CD14-positive monocyte (primary cell): ENCODE measurements at regions of chr5 and their contacts with region 1.

Region 1: GRCh38 chr5:15013654-15014463 is 142.3 kb upstream of the ANKH start:
- DNase-seq: peak in 2 of 3 donors; percentile 23 to 38
- H3K4me3 ChIP-seq: no peak overlapping the region
- H3K4me3 Mint-ChIP-seq: no peak overlapping the region
- H3K27ac ChIP-seq: no peak overlapping the region
- H3K27ac Mint-ChIP-seq: no peak overlapping the region
- H3K4me1 ChIP-seq: no peaks in the 10 kb centered on the region
- H3K4me1 Mint-ChIP-seq: no peaks in the 10 kb centered on the region
- H3K27me3 ChIP-seq: peaks cover 0 to 2% of the 10 kb centered on the region in 2 donors
- H3K27me3 Mint-ChIP-seq: peaks cover 4 to 13% (median 7%) of the 10 kb centered on the region in 3 donors
- CTCF ChIP-seq: peak; percentile 88

Region 2: GRCh38 chr5:14351845-14352712 is 661.8 kb before region 1 on chr5:
- intact Hi-C with region 1: loop called in 1 of 2 experiments (anchors 10 kb)
- DNase-seq: peak; percentile 64 to 80 (median 69)
- H3K4me3 ChIP-seq: peak overlapping the region in 1 of 3 experiments; percentile 54
- H3K4me3 Mint-ChIP-seq: peak overlapping the region in 1 of 2 donors; percentile 74
- H3K27ac ChIP-seq: peak overlapping the region; percentile 3 to 47
- H3K27ac Mint-ChIP-seq: peak overlapping the region in 5 of 7 donors; percentile 45 to 83 (median 55)
- H3K4me1 ChIP-seq: peaks cover 33 to 43% of the 10 kb centered on the region in 2 donors
- H3K4me1 Mint-ChIP-seq: peaks cover 44% of the 10 kb centered on the region
- H3K27me3 ChIP-seq: no peaks in the 10 kb centered on the region
- H3K27me3 Mint-ChIP-seq: peaks cover 0 to 1% (median 0%) of the 10 kb centered on the region in 3 donors
- CTCF ChIP-seq: peak; percentile 98

Region 3: GRCh38 chr5:14685757-14686156 is 328.1 kb before region 1 on chr5:
- intact Hi-C with region 1: loop called in 1 of 2 experiments (anchors 5 kb)
- DNase-seq: no peak
- H3K4me3 ChIP-seq: no peak overlapping the region
- H3K4me3 Mint-ChIP-seq: no peak overlapping the region
- H3K27ac ChIP-seq: no peak overlapping the region
- H3K27ac Mint-ChIP-seq: no peak overlapping the region
- H3K4me1 ChIP-seq: no peaks in the 10 kb centered on the region
- H3K4me1 Mint-ChIP-seq: no peaks in the 10 kb centered on the region
- H3K27me3 ChIP-seq: no peaks in the 10 kb centered on the region
- H3K27me3 Mint-ChIP-seq: peaks cover 0 to 1% (median 1%) of the 10 kb centered on the region in 3 donors
- CTCF ChIP-seq: peak; percentile 57

Region 4: GRCh38 chr5:15105796-15106393 is 92.0 kb after region 1 on chr5:
- intact Hi-C with region 1: no loop called
- DNase-seq: peak; percentile 3 to 11 (median 7)
- H3K4me3 ChIP-seq: no peak overlapping the region
- H3K4me3 Mint-ChIP-seq: no peak overlapping the region
- H3K27ac ChIP-seq: no peak overlapping the region
- H3K27ac Mint-ChIP-seq: no peak overlapping the region
- H3K4me1 ChIP-seq: no peaks in the 10 kb centered on the region
- H3K4me1 Mint-ChIP-seq: no peaks in the 10 kb centered on the region
- H3K27me3 ChIP-seq: no peaks in the 10 kb centered on the region
- H3K27me3 Mint-ChIP-seq: peaks cover 0 to 3% (median 2%) of the 10 kb centered on the region in 3 donors
- CTCF ChIP-seq: peak; percentile 74

Region 5: GRCh38 chr5:15604986-15605385 is 591.1 kb after region 1 on chr5:
- intact Hi-C with region 1: no loop called
- DNase-seq: no peak
- H3K4me3 ChIP-seq: no peak overlapping the region
- H3K4me3 Mint-ChIP-seq: no peak overlapping the region
- H3K27ac ChIP-seq: no peak overlapping the region
- H3K27ac Mint-ChIP-seq: no peak overlapping the region
- H3K4me1 ChIP-seq: no peaks in the 10 kb centered on the region
- H3K4me1 Mint-ChIP-seq: no peaks in the 10 kb centered on the region
- H3K27me3 ChIP-seq: no peaks in the 10 kb centered on the region
- H3K27me3 Mint-ChIP-seq: peaks cover 0 to 1% (median 0%) of the 10 kb centered on the region in 3 donors
- CTCF ChIP-seq: no peak